Spleen (tissue), 13 donors: ENCODE measurements at regions of chr12 and their contacts with region 1.

Region 1: DNA sequence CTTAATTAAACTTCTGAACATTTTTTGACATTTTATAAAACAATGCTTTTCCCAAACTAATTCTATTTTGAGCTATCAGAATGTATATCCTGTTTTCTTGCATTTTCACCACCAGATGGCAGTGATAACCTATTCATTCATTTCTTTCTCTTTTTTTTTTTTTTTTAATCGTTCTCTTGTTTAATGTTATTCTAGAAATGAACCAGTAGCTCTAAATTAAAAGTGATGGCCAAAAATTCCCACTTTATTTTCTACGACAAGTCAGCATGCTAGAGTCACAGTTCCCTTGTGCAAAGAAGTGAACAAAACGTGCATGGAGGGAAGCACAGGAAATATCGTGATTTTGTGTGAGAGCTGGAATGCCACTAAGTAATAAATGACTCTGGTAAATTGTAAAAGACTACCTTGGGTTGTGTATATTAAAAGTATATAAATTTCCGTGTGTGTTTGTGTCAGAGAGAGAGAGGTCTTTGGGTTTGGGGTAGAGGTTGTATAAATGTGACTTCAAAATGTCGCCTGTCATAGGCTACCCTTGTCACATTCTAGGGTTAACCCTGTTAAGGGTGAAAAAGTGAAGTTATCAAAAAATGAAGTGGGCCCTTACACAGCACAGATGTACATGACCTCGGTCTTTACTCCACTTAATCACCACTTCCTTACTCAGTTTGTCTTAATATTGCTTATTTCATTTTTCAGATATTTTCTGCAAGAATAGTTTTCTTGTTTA is 40.4 kb upstream of the LDHB start:
- DNase-seq: no peak
- H3K4me3 ChIP-seq: peak overlapping the region in 1 of 8 donors; percentile 22
- H3K27ac ChIP-seq: no peak overlapping the region
- H3K4me1 ChIP-seq: peaks cover 0 to 5% (median 2%) of the 10 kb centered on the region in 6 donors
- H3K27me3 ChIP-seq: no peaks in the 10 kb centered on the region
- CTCF ChIP-seq: peak; percentile 43 to 87 (median 63)
- POLR2A ChIP-seq: no peak

Region 2: GRCh38 chr12:22018860-22019259 is 320.8 kb after region 1 on chr12:
- intact Hi-C with region 1: loop called (anchors 5 kb)
- DNase-seq: no peak
- H3K4me3 ChIP-seq: no peak overlapping the region
- H3K27ac ChIP-seq: no peak overlapping the region
- H3K4me1 ChIP-seq: no peaks in the 10 kb centered on the region
- H3K27me3 ChIP-seq: no peaks in the 10 kb centered on the region
- CTCF ChIP-seq: peak in 7 of 11 experiments; percentile 23 to 47 (median 36)
- POLR2A ChIP-seq: no peak

Region 3: DNA sequence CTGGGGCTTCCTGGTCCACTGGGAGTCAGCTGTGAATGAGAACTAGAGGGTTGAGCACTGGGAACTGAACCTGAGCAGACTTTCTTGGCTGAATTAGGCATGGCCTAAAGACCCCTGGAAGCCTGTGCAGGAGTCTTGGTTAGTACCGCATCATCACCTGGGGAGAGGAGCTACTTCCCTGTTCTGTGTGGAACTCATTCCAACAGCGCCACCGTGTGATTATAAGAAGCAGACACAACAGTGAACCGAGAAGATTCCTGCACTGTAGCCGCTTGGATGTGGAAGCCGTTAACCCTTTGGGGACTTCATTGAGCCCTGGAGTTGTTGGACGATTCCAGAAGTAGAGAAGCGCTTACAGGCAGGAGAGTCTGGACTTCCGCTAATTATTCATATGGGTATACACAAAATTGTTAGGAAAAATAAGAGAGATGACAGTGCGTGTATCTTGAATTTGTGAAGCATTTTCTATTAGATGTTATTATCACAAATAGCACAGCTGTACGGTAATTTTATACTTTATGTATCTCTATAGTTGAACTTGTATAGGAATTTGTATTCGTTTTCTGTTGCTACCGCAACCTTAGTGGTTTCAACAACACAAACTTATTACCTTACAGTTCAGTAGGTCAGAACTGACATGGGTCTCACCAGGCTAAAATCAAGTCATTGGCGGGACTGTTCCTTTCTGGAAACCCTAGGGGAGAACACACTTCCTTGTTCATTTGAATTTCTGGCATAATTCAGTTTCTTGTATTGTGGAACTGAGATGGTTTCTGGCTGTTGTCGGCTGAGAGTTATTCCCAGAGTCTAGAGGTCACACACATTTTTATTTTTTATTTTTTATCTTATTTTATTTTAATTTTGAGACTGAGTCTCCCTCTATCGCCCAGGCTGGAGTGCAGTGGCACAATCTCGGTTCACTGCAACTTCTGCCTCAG is 745.6 kb after region 1 on chr12:
- intact Hi-C with region 1: loop called (anchors 5 kb)
- DNase-seq: peak; percentile 70
- H3K4me3 ChIP-seq: no peak overlapping the region
- H3K27ac ChIP-seq: no peak overlapping the region
- H3K4me1 ChIP-seq: peaks cover 0 to 7% (median 3%) of the 10 kb centered on the region in 6 donors
- H3K27me3 ChIP-seq: no peaks in the 10 kb centered on the region
- CTCF ChIP-seq: peak; percentile 53 to 79 (median 65)
- POLR2A ChIP-seq: no peak